ENCODE measurements at regions of chr20 and their contacts with region 1.

Region 1: DNA sequence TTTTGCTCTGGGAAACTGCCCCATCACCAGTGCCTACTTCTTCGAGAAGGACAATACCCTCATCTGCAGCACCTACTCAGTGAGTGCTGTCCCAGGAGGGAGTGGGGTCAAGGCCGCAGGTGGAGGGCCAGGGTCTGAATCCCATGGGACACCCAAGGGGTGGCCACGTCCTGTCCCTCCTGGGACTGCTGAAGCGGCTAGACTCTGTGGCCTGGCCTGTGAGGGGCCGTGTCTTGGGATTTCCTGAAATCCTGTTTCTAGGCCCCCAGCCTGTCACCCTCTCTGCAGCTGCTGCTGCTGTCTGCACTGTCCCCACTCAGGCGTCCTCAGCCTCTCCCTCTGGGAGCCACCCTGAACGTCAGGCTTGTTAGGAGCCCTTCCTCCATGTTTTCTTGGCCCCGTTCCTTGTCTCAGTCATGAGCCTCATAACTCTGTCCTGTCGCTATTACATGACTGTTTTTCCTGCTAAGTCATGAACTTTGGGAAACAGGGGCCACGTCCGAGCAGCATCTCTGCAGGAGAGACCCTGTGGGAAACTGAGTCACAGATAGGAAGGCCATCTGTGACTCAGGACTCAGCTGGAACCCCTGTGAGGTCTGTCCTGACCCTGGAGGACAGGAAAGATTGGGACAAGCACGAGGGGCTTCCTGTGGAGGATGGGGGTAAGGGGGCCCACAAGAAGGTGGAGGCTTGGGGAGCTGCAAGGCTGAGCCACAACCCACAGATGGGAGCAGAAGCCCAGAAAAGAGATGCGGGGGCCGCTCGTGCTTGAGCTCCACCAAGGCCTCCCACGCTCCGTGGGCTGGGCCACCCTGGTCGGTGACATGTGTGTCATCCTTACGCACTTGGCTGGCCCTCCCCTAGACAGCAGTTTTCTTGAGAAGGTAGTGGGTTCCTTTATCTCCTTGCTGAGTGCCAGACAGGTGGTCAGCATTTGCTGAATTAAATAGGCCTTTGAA is 49.9 kb downstream of the EFCAB8 start:
- DNase-seq: peak in 1 of 5 donors; percentile 45
- ATAC-seq: no peak
- H3K4me3 ChIP-seq: no peak overlapping the region
- H3K27ac ChIP-seq: no peak overlapping the region
- H3K4me1 ChIP-seq: no peaks in the 10 kb centered on the region
- H3K27me3 ChIP-seq: no peaks in the 10 kb centered on the region
- CTCF ChIP-seq: no peak
- POLR2A ChIP-seq: no peak

Region 2: GRCh38 chr20:33097001-33097400 is 188.4 kb after region 1 on chr20:
- intact Hi-C with region 1: loop called in 8 of 10 experiments (anchors 2 to 5 kb)
- DNase-seq: no peak
- ATAC-seq: no peak
- H3K4me3 ChIP-seq: no peak overlapping the region
- H3K27ac ChIP-seq: no peak overlapping the region
- H3K4me1 ChIP-seq: no peaks in the 10 kb centered on the region
- H3K27me3 ChIP-seq: no peaks in the 10 kb centered on the region
- CTCF ChIP-seq: no peak
- POLR2A ChIP-seq: no peak

Region 3: GRCh38 chr20:33291830-33292355 is 383.3 kb after region 1 on chr20:
- intact Hi-C with region 1: loop called in 7 of 10 experiments (anchors 5 to 10 kb)
- DNase-seq: peak in 1 of 5 donors; percentile 21
- ATAC-seq: peak in 1 of 4 donors; percentile 20
- H3K4me3 ChIP-seq: no peak overlapping the region
- H3K27ac ChIP-seq: no peak overlapping the region
- H3K4me1 ChIP-seq: no peaks in the 10 kb centered on the region
- H3K27me3 ChIP-seq: peaks cover 0 to 44% (median 3%) of the 10 kb centered on the region in 9 donors
- CTCF ChIP-seq: peak; percentile 43 to 87 (median 66)
- POLR2A ChIP-seq: no peak

Region 4: GRCh38 chr20:33299111-33299603 is 390.5 kb after region 1 on chr20:
- intact Hi-C with region 1: loop called (anchors 2 to 10 kb)
- DNase-seq: peak; percentile 31 to 79 (median 53)
- ATAC-seq: peak in 3 of 4 donors; percentile 69 to 76 (median 72)
- H3K4me3 ChIP-seq: no peak overlapping the region
- H3K27ac ChIP-seq: no peak overlapping the region
- H3K4me1 ChIP-seq: peaks cover 0 to 6% (median 0%) of the 10 kb centered on the region in 12 donors
- H3K27me3 ChIP-seq: peaks cover 0 to 17% (median 0%) of the 10 kb centered on the region in 9 donors
- CTCF ChIP-seq: peak; percentile 71 to 90 (median 85)
- POLR2A ChIP-seq: no peak